Activated CD4-positive, alpha-beta T cell treated with anti-CD3 and anti-CD28 coated beads for 36 hours (primary cell): ENCODE measurements at regions of chr9 and their contacts with region 1.

Region 1: GRCh38 chr9:91422758-91423711 is 597 bp downstream of the NFIL3 start:
- DNase-seq: peak; percentile 83
- ATAC-seq: peak; percentile 8
- H3K4me3 Mint-ChIP-seq: peak overlapping the region; percentile 98
- H3K27ac Mint-ChIP-seq: peak overlapping the region; percentile 95
- H3K4me1 Mint-ChIP-seq: peaks cover 55% of the 10 kb centered on the region
- H3K27me3 Mint-ChIP-seq: no peaks in the 10 kb centered on the region

Region 2: GRCh38 chr9:89483592-89484522 is 1939.2 kb before region 1 on chr9:
- CTCF ChIA-PET with region 1: no interaction called
- POLR2A ChIA-PET with region 1: no interaction called
- intact Hi-C with region 1: loop called in 1 of 2 experiments (anchors 10 kb)
- DNase-seq: peak; percentile 79
- ATAC-seq: peak; percentile 57
- H3K4me3 Mint-ChIP-seq: peak overlapping the region; percentile 79
- H3K27ac Mint-ChIP-seq: peak overlapping the region; percentile 93
- H3K4me1 Mint-ChIP-seq: peaks cover 91% of the 10 kb centered on the region
- H3K27me3 Mint-ChIP-seq: no peaks in the 10 kb centered on the region

Region 3: DNA sequence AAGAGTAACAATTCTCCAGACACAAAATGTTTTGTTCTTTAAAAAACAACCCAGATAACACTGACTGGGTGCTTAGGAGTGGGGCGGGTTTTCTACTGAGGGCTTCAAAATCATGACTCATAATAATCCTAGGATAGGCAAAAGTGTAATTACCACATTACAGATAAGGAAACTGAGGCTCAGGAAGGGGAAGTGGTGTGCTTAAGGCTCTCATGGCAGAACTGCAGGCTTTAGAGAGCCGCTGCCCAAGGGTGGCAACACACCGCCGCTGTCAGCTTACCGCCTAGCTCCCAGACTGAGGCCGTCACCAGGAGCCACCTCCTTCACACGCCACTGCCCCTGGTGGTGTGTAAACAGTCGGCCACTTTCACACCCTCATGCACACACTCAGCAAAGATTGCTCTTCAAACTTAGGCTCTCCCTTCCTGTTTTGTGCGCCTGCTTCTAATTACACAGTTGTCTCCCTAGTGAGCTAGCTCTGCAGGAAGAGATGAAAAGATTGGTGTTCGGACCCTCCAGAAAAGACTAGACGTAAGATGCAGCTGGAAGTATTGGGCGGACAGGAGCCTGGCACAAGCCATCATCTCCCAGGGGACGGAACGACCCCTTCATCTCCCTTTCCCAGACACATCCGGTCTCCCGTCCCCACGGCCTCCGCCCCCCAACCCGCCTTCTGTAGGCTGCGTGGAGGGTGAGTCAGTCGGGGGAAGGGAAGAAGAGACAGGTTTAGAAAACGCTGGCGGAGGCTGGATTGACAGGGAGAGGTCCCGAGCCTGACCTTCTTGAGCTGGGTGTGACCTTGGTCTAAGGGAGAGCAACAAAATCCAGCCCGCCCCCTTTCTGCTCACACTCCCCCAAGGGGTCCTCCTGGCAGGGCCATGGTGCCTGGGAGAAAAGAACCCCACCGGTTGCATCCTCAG is 458.7 kb before region 1 on chr9:
- CTCF ChIA-PET with region 1: no interaction called
- POLR2A ChIA-PET with region 1: no interaction called
- intact Hi-C with region 1: loop called in 1 of 2 experiments (anchors 5 kb)
- DNase-seq: peak; percentile 48
- ATAC-seq: peak; percentile 47
- H3K4me3 Mint-ChIP-seq: no peak overlapping the region
- H3K27ac Mint-ChIP-seq: no peak overlapping the region
- H3K4me1 Mint-ChIP-seq: peaks cover 37% of the 10 kb centered on the region
- H3K27me3 Mint-ChIP-seq: peaks cover 26% of the 10 kb centered on the region

Region 4: GRCh38 chr9:91071185-91071990 is 351.6 kb before region 1 on chr9:
- CTCF ChIA-PET with region 1: no interaction called
- POLR2A ChIA-PET with region 1: interaction called, 4 read pairs
- intact Hi-C with region 1: loop called in 1 of 2 experiments (anchors 1 kb)
- DNase-seq: peak; percentile 88
- ATAC-seq: peak; percentile 97
- H3K4me3 Mint-ChIP-seq: peak overlapping the region; percentile 37
- H3K27ac Mint-ChIP-seq: peak overlapping the region; percentile 97
- H3K4me1 Mint-ChIP-seq: peaks cover 24% of the 10 kb centered on the region
- H3K27me3 Mint-ChIP-seq: peaks cover 7% of the 10 kb centered on the region

Region 5: DNA sequence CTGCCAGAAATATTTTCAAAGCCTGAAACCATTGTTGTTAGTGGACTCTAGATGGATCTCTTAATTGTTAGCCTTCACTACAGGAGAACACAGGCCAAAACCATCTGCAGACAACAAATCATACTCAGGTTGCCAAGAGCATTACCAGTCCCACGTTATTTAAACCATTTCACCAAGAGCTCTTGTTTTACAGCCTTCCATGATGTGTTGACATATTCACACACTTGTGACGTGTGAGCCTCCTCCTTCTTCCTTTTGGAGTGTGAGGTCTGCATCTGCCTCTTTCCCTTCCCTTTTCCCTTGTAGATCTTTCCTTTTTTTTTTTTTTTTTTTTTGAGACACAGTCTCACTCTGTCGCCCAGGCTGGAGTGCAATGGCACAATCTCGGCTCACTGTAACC is 340.3 kb before region 1 on chr9:
- CTCF ChIA-PET with region 1: no interaction called
- POLR2A ChIA-PET with region 1: no interaction called
- intact Hi-C with region 1: no loop called
- DNase-seq: no peak
- ATAC-seq: no peak
- H3K4me3 Mint-ChIP-seq: no peak overlapping the region
- H3K27ac Mint-ChIP-seq: no peak overlapping the region
- H3K4me1 Mint-ChIP-seq: peaks cover 23% of the 10 kb centered on the region
- H3K27me3 Mint-ChIP-seq: peaks cover 2% of the 10 kb centered on the region

Region 6: DNA sequence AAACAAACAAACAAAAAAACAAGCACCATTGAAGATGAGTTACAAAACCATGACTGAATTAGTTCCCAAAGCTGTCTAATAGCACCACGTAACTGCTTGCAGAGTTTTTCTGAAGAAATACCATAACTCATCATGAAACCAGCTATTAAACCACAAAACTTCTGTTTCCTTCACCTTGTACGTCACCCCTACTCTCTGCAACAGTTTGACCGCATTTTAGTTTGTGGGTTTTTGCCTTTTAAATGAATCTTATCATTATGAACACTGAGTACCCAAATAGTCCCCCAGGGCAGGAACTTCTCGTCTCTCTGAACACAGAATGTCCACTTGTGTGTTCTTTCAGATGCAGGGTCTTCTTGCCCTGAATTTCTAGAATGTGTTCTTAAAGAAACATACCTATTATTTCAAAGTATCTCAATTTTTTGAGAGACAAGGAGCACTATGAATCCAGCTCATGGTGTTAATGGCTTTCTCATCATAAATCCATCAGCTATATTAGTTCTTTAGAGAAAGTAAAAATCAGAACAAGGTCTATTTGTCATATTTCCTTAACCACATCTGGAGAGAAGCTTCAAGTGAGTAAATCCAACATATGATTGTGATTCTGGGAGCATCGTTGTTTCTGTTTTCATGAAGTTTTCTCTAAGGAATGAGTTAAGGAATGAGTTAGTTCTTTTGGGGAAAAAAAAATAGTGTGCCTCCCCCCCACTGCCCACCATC is 271.9 kb before region 1 on chr9:
- CTCF ChIA-PET with region 1: interaction called, 3 read pairs
- POLR2A ChIA-PET with region 1: interaction called, 10 read pairs
- intact Hi-C with region 1: loop called in 1 of 2 experiments (anchors 1 kb)
- DNase-seq: peak; percentile 66
- ATAC-seq: peak; percentile 65
- H3K4me3 Mint-ChIP-seq: peak overlapping the region; percentile 13
- H3K27ac Mint-ChIP-seq: peak overlapping the region; percentile 95
- H3K4me1 Mint-ChIP-seq: peaks cover 79% of the 10 kb centered on the region
- H3K27me3 Mint-ChIP-seq: no peaks in the 10 kb centered on the region

Region 7: DNA sequence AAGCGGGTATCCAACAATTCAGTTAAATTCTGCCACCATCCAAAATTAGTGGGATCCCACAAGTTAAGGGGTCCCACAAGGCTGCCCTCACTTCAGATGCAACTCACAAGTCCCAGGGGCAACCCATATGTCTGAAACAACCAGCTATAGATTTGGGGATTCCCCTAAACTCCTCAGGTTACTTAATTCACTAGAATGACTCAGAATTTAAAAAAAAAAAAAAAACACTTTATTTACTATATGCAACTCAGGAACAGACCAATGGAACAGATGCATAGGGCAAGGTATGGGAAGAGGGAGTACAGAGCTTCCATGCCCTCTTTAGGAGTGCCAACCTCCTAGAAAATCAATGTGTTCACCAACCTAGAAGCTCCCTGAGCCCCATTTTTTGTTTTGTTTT is 76.4 kb before region 1 on chr9:
- CTCF ChIA-PET with region 1: interaction called, 5 read pairs
- POLR2A ChIA-PET with region 1: interaction called, 7 read pairs
- intact Hi-C with region 1: loop called in 1 of 2 experiments (anchors 1 kb)
- DNase-seq: no peak
- ATAC-seq: peak; percentile 65
- H3K4me3 Mint-ChIP-seq: no peak overlapping the region
- H3K27ac Mint-ChIP-seq: peak overlapping the region; percentile 3
- H3K4me1 Mint-ChIP-seq: peaks cover 56% of the 10 kb centered on the region
- H3K27me3 Mint-ChIP-seq: no peaks in the 10 kb centered on the region

Region 8: GRCh38 chr9:91405343-91406077 is 17.5 kb before region 1 on chr9:
- CTCF ChIA-PET with region 1: no interaction called
- POLR2A ChIA-PET with region 1: no interaction called
- intact Hi-C with region 1: no loop called
- DNase-seq: no peak
- ATAC-seq: peak; percentile 13
- H3K4me3 Mint-ChIP-seq: no peak overlapping the region
- H3K27ac Mint-ChIP-seq: no peak overlapping the region
- H3K4me1 Mint-ChIP-seq: peaks cover 14% of the 10 kb centered on the region
- H3K27me3 Mint-ChIP-seq: peaks cover 3% of the 10 kb centered on the region